PC-9 (cell line): ENCODE measurements at regions of chr2 and their contacts with region 1.

Region 1: DNA sequence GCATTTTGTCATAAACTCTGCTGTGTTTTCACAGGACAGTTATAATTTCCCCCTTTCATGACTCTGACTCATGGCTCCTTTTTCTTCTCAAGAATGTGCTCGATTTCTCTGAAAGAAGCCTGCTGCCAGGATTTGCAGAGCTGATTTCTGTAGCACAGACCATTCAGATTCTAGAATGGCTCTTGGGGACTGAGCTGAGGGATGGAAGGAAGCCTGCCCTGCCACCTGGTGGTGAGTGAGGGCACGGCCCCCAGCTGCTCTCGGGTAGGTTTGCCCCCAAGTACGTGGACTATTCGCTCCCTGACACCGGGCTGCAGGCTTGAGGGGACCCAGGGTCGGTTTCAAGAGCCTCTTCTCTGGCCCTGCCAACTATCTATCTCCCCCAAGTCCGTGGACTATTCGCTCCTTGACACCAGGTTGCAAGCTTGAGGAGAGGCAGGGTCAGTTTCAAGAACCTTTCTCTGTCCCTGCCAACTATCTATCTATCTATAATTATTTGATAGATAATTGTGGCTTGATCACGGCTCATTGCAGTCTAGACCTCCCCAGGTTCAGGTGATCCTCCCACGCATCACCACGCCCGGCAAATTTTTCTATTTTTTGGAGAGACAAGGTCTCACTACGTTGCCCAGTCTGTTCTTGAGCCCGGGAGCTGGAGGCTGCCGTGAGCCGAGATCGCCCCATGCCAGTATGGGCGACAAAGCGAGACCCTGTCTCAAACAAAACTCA is 1.4 kb upstream of the SMYD5 start:
- DNase-seq: peak; percentile 63 to 66
- H3K4me3 ChIP-seq: no peak overlapping the region
- H3K27ac ChIP-seq: no peak overlapping the region
- H3K4me1 ChIP-seq: peaks cover 10% of the 10 kb centered on the region; the same call in 1 of the 2 replicates
- H3K27me3 ChIP-seq: no peaks in the 10 kb centered on the region
- CTCF ChIP-seq: peak; percentile 96

Region 2: GRCh38 chr2:73085691-73086360 is 126.8 kb before region 1 on chr2:
- CTCF ChIA-PET with region 1: interaction called, 4 read pairs
- POLR2A ChIA-PET with region 1: no interaction called
- intact Hi-C with region 1: loop called (anchors 2 kb)
- DNase-seq: peak; percentile 63 to 73
- H3K4me3 ChIP-seq: no peak overlapping the region
- H3K27ac ChIP-seq: no peak overlapping the region
- H3K4me1 ChIP-seq: peaks cover 7% of the 10 kb centered on the region
- H3K27me3 ChIP-seq: no peaks in the 10 kb centered on the region
- CTCF ChIP-seq: peak; percentile 96

Region 3: GRCh38 chr2:73092146-73092814 is 120.3 kb before region 1 on chr2:
- CTCF ChIA-PET with region 1: interaction called, 16 read pairs
- POLR2A ChIA-PET with region 1: no interaction called
- intact Hi-C with region 1: no loop called
- DNase-seq: no peak
- H3K4me3 ChIP-seq: no peak overlapping the region
- H3K27ac ChIP-seq: no peak overlapping the region
- H3K4me1 ChIP-seq: peaks cover 7% of the 10 kb centered on the region
- H3K27me3 ChIP-seq: no peaks in the 10 kb centered on the region
- CTCF ChIP-seq: no peak

Region 4: GRCh38 chr2:73122536-73122935 is 90.1 kb before region 1 on chr2:
- CTCF ChIA-PET with region 1: no interaction called
- POLR2A ChIA-PET with region 1: no interaction called
- intact Hi-C with region 1: no loop called
- DNase-seq: no peak
- H3K4me3 ChIP-seq: no peak overlapping the region
- H3K27ac ChIP-seq: no peak overlapping the region
- H3K4me1 ChIP-seq: no peaks in the 10 kb centered on the region
- H3K27me3 ChIP-seq: no peaks in the 10 kb centered on the region
- CTCF ChIP-seq: no peak

Region 5: GRCh38 chr2:73156539-73157124 is 56.0 kb before region 1 on chr2:
- CTCF ChIA-PET with region 1: no interaction called
- POLR2A ChIA-PET with region 1: no interaction called
- intact Hi-C with region 1: no loop called
- DNase-seq: peak in 1 of 2 experiments; percentile 34
- H3K4me3 ChIP-seq: no peak overlapping the region
- H3K27ac ChIP-seq: no peak overlapping the region
- H3K4me1 ChIP-seq: no peaks in the 10 kb centered on the region
- H3K27me3 ChIP-seq: peaks cover 23% of the 10 kb centered on the region
- CTCF ChIP-seq: peak; percentile 56

Region 6: DNA sequence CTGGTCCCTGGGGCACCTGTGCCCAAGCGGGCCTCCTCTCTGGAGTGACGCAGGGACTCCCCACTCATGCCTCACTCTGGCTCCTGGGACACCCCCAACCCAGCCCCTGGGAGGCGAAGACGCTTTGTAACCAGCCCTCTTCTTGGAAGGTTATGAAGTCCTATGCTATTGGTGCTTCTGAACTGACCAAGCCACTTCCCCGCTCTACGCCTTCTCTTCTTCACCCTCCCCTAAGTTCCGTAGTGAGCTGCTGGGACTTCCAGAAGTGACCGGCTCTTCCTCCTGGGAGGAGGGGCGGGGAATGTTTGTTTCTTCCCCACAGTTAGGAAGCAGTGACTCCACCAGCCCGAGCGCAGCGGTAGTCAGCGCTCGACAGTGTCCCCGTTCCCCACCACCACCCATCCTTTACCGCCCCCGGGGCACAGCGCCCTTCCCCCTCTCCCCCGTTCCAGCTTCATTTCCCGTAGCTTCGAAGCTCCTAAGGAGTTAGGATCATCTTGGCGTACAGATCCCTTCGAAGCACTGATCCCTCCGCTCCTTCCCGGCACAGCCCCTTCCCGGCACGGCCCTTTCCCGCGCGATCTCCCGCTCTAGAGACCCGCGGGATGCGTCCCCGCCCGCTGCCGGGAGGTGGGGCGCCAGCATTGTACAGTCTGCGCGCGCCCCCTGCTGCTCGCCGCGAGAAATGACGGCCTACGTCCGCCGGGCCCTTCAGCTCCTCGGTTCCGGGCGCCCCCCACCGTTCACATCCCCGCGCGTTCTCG is 35.5 kb before region 1 on chr2:
- CTCF ChIA-PET with region 1: interaction called, 17 read pairs
- POLR2A ChIA-PET with region 1: no interaction called
- intact Hi-C with region 1: loop called (anchors 1 kb)
- DNase-seq: peak; percentile 63 to 83
- H3K4me3 ChIP-seq: peak overlapping the region; percentile 61
- H3K27ac ChIP-seq: no peak overlapping the region
- H3K4me1 ChIP-seq: peaks cover 19% of the 10 kb centered on the region
- H3K27me3 ChIP-seq: peaks cover 55% of the 10 kb centered on the region
- CTCF ChIP-seq: peak; percentile 99

Region 7: GRCh38 chr2:73233154-73233931 is 20.7 kb after region 1 on chr2 and contains the start of gene PRADC1:
- CTCF ChIA-PET with region 1: interaction called, 4 read pairs
- POLR2A ChIA-PET with region 1: interaction called, 6 read pairs
- intact Hi-C with region 1: loop called (anchors 1 kb)
- DNase-seq: peak; percentile 98 to 100
- H3K4me3 ChIP-seq: peak within 1 kb of the TSS; percentile 89
- H3K27ac ChIP-seq: peak within 1 kb of the TSS; percentile 82
- H3K4me1 ChIP-seq: peaks cover 20% of the 10 kb centered on the region
- H3K27me3 ChIP-seq: no peaks in the 10 kb centered on the region
- CTCF ChIP-seq: no peak
- total RNA-seq, gene PRADC1: 8.9 and 9.4 TPM in 2 replicates